BJ (cell line): ENCODE measurements at regions of chr5 and their contacts with region 1.

Region 1: DNA sequence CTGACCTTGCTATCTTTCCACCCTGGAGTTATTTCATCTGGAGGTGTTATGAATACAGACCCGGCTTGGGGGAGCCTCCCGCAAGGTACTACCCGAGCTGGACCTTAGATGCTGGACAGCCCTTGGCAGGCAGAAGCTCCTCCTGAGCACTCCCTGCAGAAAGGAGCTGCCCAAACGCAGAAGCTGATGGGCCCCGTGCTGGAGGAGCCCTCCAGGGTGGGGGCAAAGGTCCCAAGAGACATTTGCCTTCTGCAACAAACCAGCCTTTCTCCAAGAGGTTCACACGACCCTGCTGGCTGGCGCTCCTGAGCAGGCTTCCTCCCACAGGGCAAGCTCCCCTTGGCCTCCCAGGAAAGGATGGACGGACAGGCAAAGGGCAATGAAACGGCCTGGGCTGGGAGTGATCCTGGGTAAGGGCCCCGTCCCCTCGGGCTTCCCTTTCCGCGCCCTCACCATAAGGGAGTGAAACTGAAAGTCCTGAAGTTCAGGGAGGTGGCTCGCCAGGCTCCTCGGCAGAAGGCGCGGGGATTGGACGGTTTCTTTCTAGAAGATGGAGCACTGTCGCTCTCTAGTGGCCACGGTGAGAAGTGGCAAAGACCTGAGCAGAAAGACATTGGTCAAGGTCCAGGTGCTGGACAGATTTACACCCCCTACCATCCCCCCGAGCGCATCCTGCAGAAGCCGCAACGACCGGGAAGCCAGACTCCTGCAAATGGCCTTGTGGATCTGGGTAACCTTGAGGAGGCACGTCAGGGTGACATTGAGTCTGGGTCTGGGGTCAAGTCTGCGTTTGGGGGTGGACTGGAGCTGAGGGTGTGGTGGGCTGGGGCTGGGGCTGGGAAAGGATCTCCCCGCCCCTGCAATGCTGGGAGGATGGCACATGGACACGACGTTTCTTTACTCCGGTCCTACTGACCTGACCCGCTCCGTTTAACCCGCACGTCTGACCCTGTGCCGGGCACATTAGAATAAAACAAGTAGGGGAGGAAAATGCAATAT is 56.4 kb downstream of the NEURL1B start:
- DNase-seq: no peak
- H3K4me3 ChIP-seq: peak overlapping the region; percentile 66
- H3K27me3 ChIP-seq: peaks cover 16% of the 10 kb centered on the region
- CTCF ChIP-seq: peak; percentile 92

Region 2: DNA sequence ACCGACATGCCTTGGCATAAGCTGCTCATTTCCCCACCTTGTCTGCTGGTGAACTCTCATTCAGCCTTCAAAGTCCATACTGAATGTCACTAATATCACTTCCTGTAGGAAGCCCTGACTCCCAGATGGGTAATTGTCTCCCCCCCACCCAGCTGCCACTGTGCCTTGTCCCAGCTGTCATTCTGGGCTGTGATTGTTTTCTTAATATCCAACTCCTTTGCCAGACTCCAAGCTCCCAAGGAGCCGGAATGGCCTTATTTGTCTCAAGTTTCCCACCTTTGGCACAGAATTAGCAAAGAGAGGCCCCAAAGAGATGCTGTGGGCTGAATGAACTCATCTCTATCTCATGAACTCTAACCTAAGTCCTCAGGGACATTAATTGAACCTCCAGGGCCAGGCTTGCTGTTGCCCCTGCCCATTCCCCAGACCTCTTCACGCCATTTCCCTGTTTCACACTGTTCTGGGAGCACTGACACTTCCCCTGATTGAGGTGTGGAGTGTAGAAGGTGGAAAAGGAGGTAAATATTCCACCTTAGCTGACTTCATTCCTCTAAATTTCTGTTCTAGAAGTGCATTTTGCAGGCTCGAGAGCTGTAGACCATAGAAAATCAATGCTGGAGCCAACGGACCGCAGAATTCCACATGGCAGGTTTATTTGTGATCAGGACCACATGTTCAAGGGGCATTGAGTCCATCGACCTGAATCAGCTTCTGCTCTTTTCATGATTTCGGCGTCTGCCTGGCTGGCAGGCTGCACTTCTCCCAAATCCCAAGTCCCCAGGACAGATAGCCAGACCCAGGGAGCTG is 238.2 kb before region 1 on chr5:
- CTCF ChIA-PET with region 1: interaction called, 14 read pairs
- POLR2A ChIA-PET with region 1: no interaction called
- DNase-seq: no peak
- H3K4me3 ChIP-seq: no peak overlapping the region
- H3K27me3 ChIP-seq: no peaks in the 10 kb centered on the region; the same call in 1 of the 2 replicates
- CTCF ChIP-seq: no peak

Region 3: DNA sequence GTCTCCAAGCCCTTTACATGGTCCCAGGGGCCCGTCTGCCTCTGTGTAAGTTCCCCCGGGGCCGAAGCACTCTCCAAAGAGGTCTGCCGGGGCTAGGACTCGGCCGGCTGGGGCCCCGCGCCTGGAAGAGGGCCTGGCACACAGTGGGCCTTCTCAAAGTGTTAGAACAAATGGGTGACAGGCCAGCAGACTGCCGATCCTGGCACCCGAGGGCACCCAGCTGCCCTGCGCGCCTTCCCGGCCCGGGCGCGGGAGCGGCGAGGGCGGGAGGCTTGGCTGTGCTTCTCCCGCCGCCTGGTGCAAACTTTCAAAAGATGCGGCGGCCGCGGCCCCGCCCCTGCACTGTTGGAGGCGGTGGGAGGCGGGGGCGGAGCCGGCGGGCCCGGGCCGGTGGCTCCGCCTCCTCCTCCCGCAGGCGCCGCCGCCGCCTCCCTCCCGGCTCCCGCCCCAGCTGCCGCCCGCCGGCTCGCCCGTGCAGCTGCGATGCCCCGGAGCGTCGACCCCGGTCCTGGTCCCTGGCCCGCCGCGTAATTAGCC is 56.5 kb before region 1 on chr5 and contains the start of gene NEURL1B:
- CTCF ChIA-PET with region 1: interaction called, 22 read pairs
- POLR2A ChIA-PET with region 1: no interaction called
- DNase-seq: no peak
- H3K4me3 ChIP-seq: peak within 1 kb of the TSS; percentile 59
- H3K27me3 ChIP-seq: no peaks in the 10 kb centered on the region
- CTCF ChIP-seq: no peak
- polyA plus RNA-seq, gene NEURL1B: 1.5 and 2.3 TPM in 2 replicates

Region 4: GRCh38 chr5:172672680-172673079 is 24.7 kb before region 1 on chr5:
- CTCF ChIA-PET with region 1: interaction called, 12 read pairs
- POLR2A ChIA-PET with region 1: no interaction called
- DNase-seq: no peak
- H3K4me3 ChIP-seq: no peak overlapping the region
- H3K27me3 ChIP-seq: no peaks in the 10 kb centered on the region
- CTCF ChIP-seq: no peak

Region 5: GRCh38 chr5:172707285-172708182 is 10.1 kb after region 1 on chr5:
- CTCF ChIA-PET with region 1: interaction called, 62 read pairs
- POLR2A ChIA-PET with region 1: no interaction called
- DNase-seq: no peak
- H3K4me3 ChIP-seq: no peak overlapping the region
- H3K27me3 ChIP-seq: peaks cover 4% of the 10 kb centered on the region
- CTCF ChIP-seq: peak; percentile 82

Region 6: GRCh38 chr5:172897481-172898217 is 200.2 kb after region 1 on chr5:
- CTCF ChIA-PET with region 1: no interaction called
- POLR2A ChIA-PET with region 1: no interaction called
- DNase-seq: peak; percentile 99
- H3K4me3 ChIP-seq: no peak overlapping the region
- H3K27me3 ChIP-seq: no peaks in the 10 kb centered on the region
- CTCF ChIP-seq: no peak